ENCODE measurements at regions of chr2 and their contacts with region 1.

Region 1: GRCh38 chr2:181805228-181806038 is 86.1 kb upstream of the ITPRID2 start:
- DNase-seq: no peak
- ATAC-seq: no peak
- H3K4me3 ChIP-seq: no peak overlapping the region
- H3K27ac ChIP-seq: no peak overlapping the region
- H3K4me1 ChIP-seq: peaks cover 28% of the 10 kb centered on the region
- H3K27me3 ChIP-seq: no peaks in the 10 kb centered on the region
- CTCF ChIP-seq: no peak
- EP300 ChIP-seq: no peak
- POLR2A ChIP-seq: no peak
- RAD21 ChIP-seq: no peak

Region 2: GRCh38 chr2:181790716-181791649 is 14.4 kb before region 1 on chr2:
- CTCF ChIA-PET with region 1: no interaction called
- POLR2A ChIA-PET with region 1: interaction called, 9 read pairs
- in situ Hi-C with region 1: no loop called
- intact Hi-C with region 1: loop called (anchors 1 kb)
- DNase-seq: peak; percentile 88
- ATAC-seq: peak; percentile 96
- H3K4me3 ChIP-seq: peak overlapping the region; percentile 11 to 53 (median 31)
- H3K27ac ChIP-seq: peak overlapping the region; percentile 82
- H3K4me1 ChIP-seq: peaks cover 43% of the 10 kb centered on the region
- H3K27me3 ChIP-seq: no peaks in the 10 kb centered on the region
- CTCF ChIP-seq: no peak
- EP300 ChIP-seq: peak in 1 of 2 experiments; percentile 71; a peak in 2 of 4 replicates
- POLR2A ChIP-seq: no peak; a peak in 1 of 4 replicates
- RAD21 ChIP-seq: 0 out of 2 replicates have a peak, but pooled peaks have one; percentile 21

Measured in HepG2 (cell line).